ENCODE measurements at regions of chr9 and their contacts with region 1.

Region 1: GRCh38 chr9:10168241-10168640 is 444.6 kb downstream of the PTPRD start:
- DNase-seq: no peak
- ATAC-seq: no peak
- H3K4me3 ChIP-seq: no peak overlapping the region
- H3K4me3 Mint-ChIP-seq: no peak overlapping the region
- H3K27ac ChIP-seq: no peak overlapping the region
- H3K27ac Mint-ChIP-seq: no peak overlapping the region
- H3K4me1 ChIP-seq: no peaks in the 10 kb centered on the region
- H3K4me1 Mint-ChIP-seq: no peaks in the 10 kb centered on the region
- H3K27me3 ChIP-seq: no peaks in the 10 kb centered on the region
- H3K27me3 Mint-ChIP-seq: no peaks in the 10 kb centered on the region
- CTCF ChIP-seq: no peak

Region 2: GRCh38 chr9:10104774-10105173 is 63.5 kb before region 1 on chr9:
- intact Hi-C with region 1: loop called (anchors 10 kb)
- DNase-seq: no peak
- ATAC-seq: no peak
- H3K4me3 ChIP-seq: no peak overlapping the region
- H3K4me3 Mint-ChIP-seq: no peak overlapping the region
- H3K27ac ChIP-seq: no peak overlapping the region
- H3K27ac Mint-ChIP-seq: no peak overlapping the region
- H3K4me1 ChIP-seq: no peaks in the 10 kb centered on the region
- H3K4me1 Mint-ChIP-seq: no peaks in the 10 kb centered on the region
- H3K27me3 ChIP-seq: no peaks in the 10 kb centered on the region
- H3K27me3 Mint-ChIP-seq: no peaks in the 10 kb centered on the region
- CTCF ChIP-seq: no peak

Measured in natural killer cell (primary cell).